ENCODE measurements at regions of chr6 and their contacts with region 1.

Region 1: DNA sequence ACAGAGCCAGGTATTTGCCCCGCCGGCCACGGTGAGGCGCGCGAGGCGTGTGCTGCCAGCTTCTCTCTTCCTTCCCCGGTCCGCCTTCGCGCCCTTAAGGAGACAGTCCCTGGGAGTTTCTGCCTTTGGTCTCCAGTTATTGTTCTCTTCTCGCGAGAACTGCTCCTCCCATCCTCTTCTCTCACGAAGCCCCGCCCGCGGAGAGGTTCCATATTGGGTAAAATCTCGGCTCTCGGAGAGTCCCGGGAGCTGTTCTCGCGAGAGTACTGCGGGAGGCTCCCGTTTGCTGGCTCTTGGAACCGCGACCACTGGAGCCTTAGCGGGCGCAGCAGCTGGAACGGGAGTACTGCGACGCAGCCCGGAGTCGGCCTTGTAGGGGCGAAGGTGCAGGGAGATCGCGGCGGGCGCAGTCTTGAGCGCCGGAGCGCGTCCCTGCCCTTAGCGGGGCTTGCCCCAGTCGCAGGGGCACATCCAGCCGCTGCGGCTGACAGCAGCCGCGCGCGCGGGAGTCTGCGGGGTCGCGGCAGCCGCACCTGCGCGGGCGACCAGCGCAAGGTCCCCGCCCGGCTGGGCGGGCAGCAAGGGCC is at the start of gene MAPK14:
- DNase-seq: peak; percentile 98 to 100 (median 100)
- H3K4me3 ChIP-seq: peak within 1 kb of the TSS; percentile 67 to 97
- H3K4me3 Mint-ChIP-seq: peak within 1 kb of the TSS; percentile 93 to 97 (median 95)
- H3K27ac ChIP-seq: peak within 1 kb of the TSS; percentile 78
- H3K27ac Mint-ChIP-seq: peak within 1 kb of the TSS; percentile 89 to 96 (median 94)
- H3K4me1 ChIP-seq: peaks cover 40% of the 10 kb centered on the region
- H3K4me1 Mint-ChIP-seq: peaks cover 22 to 46% (median 33%) of the 10 kb centered on the region in 4 donors
- H3K27me3 ChIP-seq: no peaks in the 10 kb centered on the region
- H3K27me3 Mint-ChIP-seq: peaks cover 13 to 16% of the 10 kb centered on the region in 2 donors
- total RNA-seq, gene MAPK14: 58.9 to 64.3 TPM

Region 2: GRCh38 chr6:35920793-35921732 is 106.5 kb before region 1 on chr6 and contains the start of gene SRPK1:
- CTCF ChIA-PET with region 1: no interaction called
- POLR2A ChIA-PET with region 1: interaction called, 17 read pairs
- intact Hi-C with region 1: loop called (anchors 2 kb)
- DNase-seq: peak; percentile 75 to 81 (median 78)
- H3K4me3 ChIP-seq: peak within 1 kb of the TSS; percentile 82 to 97
- H3K4me3 Mint-ChIP-seq: peak within 1 kb of the TSS; percentile 91 to 100 (median 98)
- H3K27ac ChIP-seq: peak within 1 kb of the TSS; percentile 68
- H3K27ac Mint-ChIP-seq: peak within 1 kb of the TSS; percentile 89 to 98 (median 95)
- H3K4me1 ChIP-seq: peaks cover 44% of the 10 kb centered on the region
- H3K4me1 Mint-ChIP-seq: peaks cover 27 to 47% (median 36%) of the 10 kb centered on the region in 4 donors
- H3K27me3 ChIP-seq: no peaks in the 10 kb centered on the region
- H3K27me3 Mint-ChIP-seq: no peaks in the 10 kb centered on the region
- total RNA-seq, gene SRPK1: 47.6 to 52.0 TPM

Region 3: DNA sequence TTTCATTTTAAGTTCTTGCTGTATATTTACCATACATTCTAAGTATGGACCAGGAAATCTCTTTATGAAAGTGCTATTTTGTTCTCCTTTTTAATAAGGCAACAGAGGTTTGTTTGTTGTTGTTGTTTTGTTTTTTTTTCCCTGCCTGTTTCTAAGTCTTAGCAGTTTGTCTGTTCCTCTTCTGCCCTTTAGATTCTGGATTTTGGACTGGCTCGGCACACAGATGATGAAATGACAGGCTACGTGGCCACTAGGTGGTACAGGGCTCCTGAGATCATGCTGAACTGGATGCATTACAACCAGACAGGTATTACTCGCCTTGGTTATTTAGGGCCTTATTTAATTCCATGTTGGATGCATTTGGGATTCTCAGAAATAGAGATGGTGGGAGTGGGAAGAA is 48.1 kb after region 1 on chr6:
- CTCF ChIA-PET with region 1: interaction called, 5 read pairs
- POLR2A ChIA-PET with region 1: interaction called, 3 read pairs
- intact Hi-C with region 1: loop called (anchors 5 kb)
- DNase-seq: no peak
- H3K4me3 ChIP-seq: no peak overlapping the region
- H3K4me3 Mint-ChIP-seq: peak overlapping the region in 1 of 8 donors; percentile 13
- H3K27ac ChIP-seq: no peak overlapping the region
- H3K27ac Mint-ChIP-seq: peak overlapping the region in 5 of 7 donors; percentile 14 to 77 (median 29)
- H3K4me1 ChIP-seq: peaks cover 4% of the 10 kb centered on the region
- H3K4me1 Mint-ChIP-seq: peaks cover 9 to 21% (median 15%) of the 10 kb centered on the region in 4 donors
- H3K27me3 ChIP-seq: no peaks in the 10 kb centered on the region
- H3K27me3 Mint-ChIP-seq: no peaks in the 10 kb centered on the region

Region 4: GRCh38 chr6:36123257-36124139 is 95.9 kb after region 1 on chr6:
- CTCF ChIA-PET with region 1: interaction called, 14 read pairs
- POLR2A ChIA-PET with region 1: interaction called, 58 read pairs
- intact Hi-C with region 1: loop called (anchors 1 kb)
- DNase-seq: peak; percentile 90 to 95 (median 91)
- H3K4me3 ChIP-seq: no peak overlapping the region
- H3K4me3 Mint-ChIP-seq: peak overlapping the region; percentile 4 to 76 (median 44)
- H3K27ac ChIP-seq: peak overlapping the region; percentile 90
- H3K27ac Mint-ChIP-seq: peak overlapping the region; percentile 91 to 99 (median 96)
- H3K4me1 ChIP-seq: peaks cover 90% of the 10 kb centered on the region
- H3K4me1 Mint-ChIP-seq: peaks cover 66 to 89% (median 78%) of the 10 kb centered on the region in 4 donors
- H3K27me3 ChIP-seq: no peaks in the 10 kb centered on the region
- H3K27me3 Mint-ChIP-seq: no peaks in the 10 kb centered on the region

Region 5: DNA sequence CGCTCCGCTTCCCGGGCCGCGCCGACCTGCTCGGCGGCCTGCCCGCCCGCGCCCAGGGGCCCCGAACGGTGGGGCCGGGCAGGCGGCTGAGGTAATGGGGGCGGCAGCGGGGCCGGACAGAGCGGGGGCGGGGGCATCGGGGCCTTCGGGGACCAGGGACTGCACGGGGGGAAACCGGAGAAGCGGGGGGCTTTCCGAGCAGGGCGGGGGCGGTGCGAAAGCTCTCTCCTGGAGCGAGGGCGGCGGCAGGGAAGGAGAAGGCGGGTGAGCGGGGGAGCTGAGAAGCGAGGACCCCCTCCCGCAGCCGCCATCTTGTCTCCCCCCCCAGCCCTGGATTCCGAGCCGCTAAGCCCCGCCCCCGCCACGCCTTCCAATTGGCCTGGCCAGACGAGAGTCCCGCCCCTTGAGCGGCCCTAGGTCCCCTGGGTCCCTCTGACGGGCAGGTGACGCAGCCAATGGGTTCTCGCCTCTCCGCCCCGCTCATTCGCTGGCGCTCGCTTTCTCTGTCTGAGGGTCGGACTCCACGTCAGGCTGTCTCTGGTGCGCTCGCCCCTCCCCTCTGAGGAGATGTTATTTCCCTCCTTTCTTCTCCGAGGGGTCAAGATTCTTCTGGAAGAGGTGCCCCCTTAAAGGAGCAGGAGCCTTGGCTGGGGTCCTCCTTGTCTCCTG is 169.4 kb after region 1 on chr6:
- CTCF ChIA-PET with region 1: interaction called, 9 read pairs
- POLR2A ChIA-PET with region 1: interaction called, 32 read pairs
- intact Hi-C with region 1: loop called (anchors 1 kb)
- DNase-seq: peak; percentile 96 to 99 (median 97)
- H3K4me3 ChIP-seq: peak overlapping the region; percentile 71 to 76
- H3K4me3 Mint-ChIP-seq: peak overlapping the region; percentile 89 to 94 (median 92)
- H3K27ac ChIP-seq: peak overlapping the region; percentile 73
- H3K27ac Mint-ChIP-seq: peak overlapping the region; percentile 83 to 96 (median 92)
- H3K4me1 ChIP-seq: peaks cover 42% of the 10 kb centered on the region
- H3K4me1 Mint-ChIP-seq: peaks cover 26 to 56% (median 41%) of the 10 kb centered on the region in 4 donors
- H3K27me3 ChIP-seq: no peaks in the 10 kb centered on the region
- H3K27me3 Mint-ChIP-seq: no peaks in the 10 kb centered on the region

Region 6: GRCh38 chr6:36302227-36302976 is 274.8 kb after region 1 on chr6:
- CTCF ChIA-PET with region 1: interaction called, 5 read pairs
- POLR2A ChIA-PET with region 1: no interaction called
- intact Hi-C with region 1: loop called (anchors 1 kb)
- DNase-seq: peak; percentile 86 to 91 (median 87)
- H3K4me3 ChIP-seq: no peak overlapping the region
- H3K4me3 Mint-ChIP-seq: no peak overlapping the region
- H3K27ac ChIP-seq: no peak overlapping the region
- H3K27ac Mint-ChIP-seq: peak overlapping the region in 2 of 7 donors; percentile 30 to 32
- H3K4me1 ChIP-seq: no peaks in the 10 kb centered on the region
- H3K4me1 Mint-ChIP-seq: peaks cover 0 to 9% (median 2%) of the 10 kb centered on the region in 4 donors
- H3K27me3 ChIP-seq: no peaks in the 10 kb centered on the region
- H3K27me3 Mint-ChIP-seq: peaks cover 10 to 22% of the 10 kb centered on the region in 2 donors

Measured in CD4-positive, alpha-beta memory T cell (primary cell).